Activated naive CD4-positive, alpha-beta T cell treated with anti-CD3 and anti-CD28 coated beads, Interleukin-2, amount 10 ng/mL, durations not matched to agents 7 days and 5 days (primary cell): ENCODE measurements at regions of chr1 and their contacts with region 1.

Region 1: GRCh38 chr1:204431310-204432165 is 19.9 kb upstream of the PPP1R15B start:
- DNase-seq: peak; percentile 87
- H3K4me3 Mint-ChIP-seq: no peak overlapping the region
- H3K27ac Mint-ChIP-seq: no peak overlapping the region
- H3K4me1 Mint-ChIP-seq: no peaks in the 10 kb centered on the region
- H3K27me3 Mint-ChIP-seq: no peaks in the 10 kb centered on the region

Region 2: DNA sequence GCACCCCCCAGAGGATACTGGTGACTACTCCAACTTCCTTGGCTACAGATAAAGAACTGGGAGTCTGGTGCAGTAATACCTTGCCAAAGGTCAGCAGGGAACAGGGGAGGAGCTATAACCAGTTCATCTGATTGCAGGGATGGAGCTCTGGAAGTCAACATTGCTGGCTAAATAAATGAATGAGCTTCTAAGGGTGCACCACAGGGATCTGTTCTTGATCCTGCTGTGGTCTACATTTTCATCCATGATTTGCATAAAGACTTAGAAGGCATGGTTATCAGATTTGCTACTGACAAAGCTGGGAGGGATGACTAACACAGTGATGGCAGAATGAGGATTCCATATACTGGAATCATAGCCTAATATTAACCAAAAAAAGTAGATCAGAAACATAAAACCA is 90.2 kb before region 1 on chr1:
- CTCF ChIA-PET with region 1: no interaction called
- DNase-seq: no peak
- H3K4me3 Mint-ChIP-seq: no peak overlapping the region
- H3K27ac Mint-ChIP-seq: no peak overlapping the region
- H3K4me1 Mint-ChIP-seq: no peaks in the 10 kb centered on the region
- H3K27me3 Mint-ChIP-seq: peaks cover 32% of the 10 kb centered on the region

Region 3: GRCh38 chr1:204377795-204378608 is 53.5 kb before region 1 on chr1:
- CTCF ChIA-PET with region 1: no interaction called
- DNase-seq: peak; percentile 57
- H3K4me3 Mint-ChIP-seq: peak overlapping the region; percentile 61
- H3K27ac Mint-ChIP-seq: no peak overlapping the region
- H3K4me1 Mint-ChIP-seq: peaks cover 11% of the 10 kb centered on the region
- H3K27me3 Mint-ChIP-seq: peaks cover 1% of the 10 kb centered on the region

Region 4: DNA sequence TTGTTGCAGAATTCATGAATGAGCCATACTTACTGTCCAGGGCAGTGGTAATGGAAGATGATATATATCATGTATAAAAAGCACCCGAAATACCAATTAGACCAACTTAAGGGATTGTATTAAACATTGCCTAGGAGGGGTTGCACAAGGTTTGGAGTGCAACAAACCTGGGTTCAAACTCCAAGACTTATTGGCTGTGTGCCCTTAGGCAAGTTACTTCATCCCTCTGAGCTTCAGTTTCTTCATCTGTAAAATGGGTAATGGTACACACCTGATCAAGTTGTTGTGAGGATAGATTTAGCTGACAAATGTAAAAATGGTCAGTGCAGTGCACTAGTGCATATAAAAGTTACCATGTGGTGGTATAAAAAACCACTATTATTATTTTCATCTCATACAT is 10.1 kb before region 1 on chr1:
- CTCF ChIA-PET with region 1: interaction called, 13 read pairs
- DNase-seq: no peak
- H3K4me3 Mint-ChIP-seq: no peak overlapping the region
- H3K27ac Mint-ChIP-seq: no peak overlapping the region
- H3K4me1 Mint-ChIP-seq: peaks cover 16% of the 10 kb centered on the region
- H3K27me3 Mint-ChIP-seq: no peaks in the 10 kb centered on the region

Region 5: DNA sequence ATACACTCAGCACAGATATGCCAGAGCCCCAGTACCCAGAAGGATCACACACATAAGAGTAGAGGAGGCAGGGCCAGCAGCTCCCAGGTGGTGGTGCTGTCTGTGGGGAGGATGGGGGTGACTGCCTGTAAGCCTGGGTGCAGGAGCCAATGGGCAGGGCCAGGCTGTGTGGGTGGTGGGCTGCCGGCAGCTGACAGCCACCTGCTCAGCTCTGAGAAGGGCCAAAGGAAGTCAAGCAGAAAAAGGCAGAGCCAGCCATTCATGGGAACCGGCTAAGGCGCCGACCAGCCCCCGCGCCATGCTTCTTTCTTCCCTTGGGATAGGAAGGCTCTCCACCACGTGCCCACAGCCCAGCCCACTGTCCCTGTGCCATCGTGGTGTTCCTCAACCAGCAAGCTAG is 49.0 kb after region 1 on chr1:
- CTCF ChIA-PET with region 1: interaction called, 10 read pairs
- DNase-seq: no peak
- H3K4me3 Mint-ChIP-seq: no peak overlapping the region
- H3K27ac Mint-ChIP-seq: no peak overlapping the region
- H3K4me1 Mint-ChIP-seq: peaks cover 31% of the 10 kb centered on the region
- H3K27me3 Mint-ChIP-seq: no peaks in the 10 kb centered on the region

Region 6: GRCh38 chr1:204494281-204495077 is 62.9 kb after region 1 on chr1 and contains the start of gene PIK3C2B:
- CTCF ChIA-PET with region 1: interaction called, 178 read pairs
- DNase-seq: peak; percentile 81
- H3K4me3 Mint-ChIP-seq: peak within 1 kb of the TSS; percentile 93
- H3K27ac Mint-ChIP-seq: peak within 1 kb of the TSS; percentile 95
- H3K4me1 Mint-ChIP-seq: peaks cover 66% of the 10 kb centered on the region
- H3K27me3 Mint-ChIP-seq: peaks cover 13% of the 10 kb centered on the region

Region 7: GRCh38 chr1:204506961-204507387 is 75.4 kb after region 1 on chr1:
- CTCF ChIA-PET with region 1: interaction called, 178 read pairs
- DNase-seq: peak; percentile 88
- H3K4me3 Mint-ChIP-seq: peak overlapping the region; percentile 87
- H3K27ac Mint-ChIP-seq: peak overlapping the region; percentile 100
- H3K4me1 Mint-ChIP-seq: peaks cover 57% of the 10 kb centered on the region
- H3K27me3 Mint-ChIP-seq: peaks cover 5% of the 10 kb centered on the region